ENCODE measurements at regions of chr2 and their contacts with region 1.

Region 1: DNA sequence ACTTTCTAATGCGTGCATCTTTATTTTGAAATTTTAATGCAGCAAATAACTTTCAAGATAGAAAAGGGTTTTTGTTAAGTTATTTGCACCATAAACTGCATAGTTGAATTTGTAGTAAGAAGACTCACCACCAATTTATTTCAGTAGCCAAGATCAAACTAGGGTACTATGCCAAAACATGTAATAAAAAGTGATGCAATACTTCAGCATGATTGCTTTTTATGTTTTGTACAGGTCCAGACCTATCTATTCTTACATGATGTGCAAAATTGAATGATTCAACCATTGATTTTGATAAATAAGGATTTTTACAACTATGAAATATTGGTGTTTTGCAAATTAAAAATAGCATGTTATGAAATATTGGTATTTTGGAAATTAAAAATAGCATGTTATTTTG is 26.7 kb downstream of the AGPS start:
- DNase-seq: peak; percentile 77
- H3K4me3 Mint-ChIP-seq: peak overlapping the region; percentile 44
- H3K27ac Mint-ChIP-seq: peak overlapping the region; percentile 49
- H3K4me1 Mint-ChIP-seq: peaks cover 7% of the 10 kb centered on the region
- H3K27me3 Mint-ChIP-seq: no peaks in the 10 kb centered on the region
- CTCF ChIP-seq: no peak

Region 2: GRCh38 chr2:177392373-177393202 is 26.7 kb before region 1 on chr2 and contains the start of gene AGPS:
- CTCF ChIA-PET with region 1: interaction called, 13 read pairs
- POLR2A ChIA-PET with region 1: interaction called, 20 read pairs
- intact Hi-C with region 1: no loop called
- DNase-seq: peak; percentile 71
- H3K4me3 Mint-ChIP-seq: peak within 1 kb of the TSS; percentile 96
- H3K27ac Mint-ChIP-seq: peak within 1 kb of the TSS; percentile 97
- H3K4me1 Mint-ChIP-seq: peaks cover 48% of the 10 kb centered on the region
- H3K27me3 Mint-ChIP-seq: no peaks in the 10 kb centered on the region
- CTCF ChIP-seq: peak; percentile 14
- total RNA-seq, gene AGPS: 49.5 and 50.5 TPM in 2 replicates

Region 3: GRCh38 chr2:177397481-177398289 is 21.6 kb before region 1 on chr2:
- CTCF ChIA-PET with region 1: interaction called, 13 read pairs
- POLR2A ChIA-PET with region 1: interaction called, 20 read pairs
- intact Hi-C with region 1: no loop called
- DNase-seq: peak; percentile 66
- H3K4me3 Mint-ChIP-seq: peak overlapping the region; percentile 14
- H3K27ac Mint-ChIP-seq: peak overlapping the region; percentile 42
- H3K4me1 Mint-ChIP-seq: peaks cover 47% of the 10 kb centered on the region
- H3K27me3 Mint-ChIP-seq: no peaks in the 10 kb centered on the region
- CTCF ChIP-seq: no peak

Region 4: GRCh38 chr2:177604271-177605065 is 185.2 kb after region 1 on chr2:
- CTCF ChIA-PET with region 1: no interaction called
- POLR2A ChIA-PET with region 1: no interaction called
- intact Hi-C with region 1: loop called (anchors 5 kb)
- DNase-seq: peak; percentile 58
- H3K4me3 Mint-ChIP-seq: no peak overlapping the region
- H3K27ac Mint-ChIP-seq: no peak overlapping the region
- H3K4me1 Mint-ChIP-seq: peaks cover 5% of the 10 kb centered on the region
- H3K27me3 Mint-ChIP-seq: peaks cover 5% of the 10 kb centered on the region
- CTCF ChIP-seq: peak; percentile 42